Left cardiac atrium (tissue), 4 donors: ENCODE measurements at regions of chr9 and their contacts with region 1.

Region 1: GRCh38 chr9:134738869-134739659 is 97.5 kb downstream of the COL5A1 start:
- DNase-seq: peak; percentile 79
- ATAC-seq: peak; percentile 29 to 49

Region 2: GRCh38 chr9:134178768-134179551 is 560.1 kb before region 1 on chr9:
- intact Hi-C with region 1: loop called in 1 of 2 experiments (anchors 10 kb)
- DNase-seq: peak; percentile 33
- ATAC-seq: peak; percentile 21 to 67

Region 3: DNA sequence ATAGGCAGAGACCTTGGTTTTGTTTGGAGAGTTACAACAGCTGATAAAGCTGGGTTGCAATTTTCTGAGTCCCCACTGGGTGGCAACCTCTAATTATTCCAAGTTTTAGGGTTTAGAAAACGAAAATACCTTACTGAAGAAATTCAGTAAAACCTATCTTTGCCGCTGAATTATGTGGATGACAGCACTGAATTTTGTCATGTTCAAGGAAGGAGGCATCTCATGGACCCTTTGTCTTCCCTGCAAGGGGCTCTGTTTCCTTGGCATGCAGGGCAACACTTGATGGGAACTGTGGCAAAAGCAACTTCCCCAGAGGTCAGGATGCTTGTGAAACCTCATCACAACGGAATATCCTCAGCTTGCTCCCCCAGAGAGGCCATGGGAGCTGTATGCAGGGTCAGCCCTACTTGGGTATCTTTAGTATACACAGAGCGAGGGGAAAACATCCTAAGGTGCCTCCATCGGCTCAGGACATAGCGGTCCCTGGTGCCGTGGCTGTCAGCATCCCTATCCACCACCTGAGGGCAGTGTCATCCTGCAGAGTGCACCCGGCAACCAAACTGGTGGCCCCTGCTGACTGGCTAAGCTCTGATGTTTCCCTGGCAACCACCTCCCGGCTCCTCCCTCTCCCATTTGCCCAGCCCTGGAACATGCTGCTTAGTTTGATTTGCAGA is 289.7 kb before region 1 on chr9:
- intact Hi-C with region 1: loop called (anchors 1 to 2 kb)
- DNase-seq: peak; percentile 93
- ATAC-seq: peak; percentile 95 to 96

Region 4: DNA sequence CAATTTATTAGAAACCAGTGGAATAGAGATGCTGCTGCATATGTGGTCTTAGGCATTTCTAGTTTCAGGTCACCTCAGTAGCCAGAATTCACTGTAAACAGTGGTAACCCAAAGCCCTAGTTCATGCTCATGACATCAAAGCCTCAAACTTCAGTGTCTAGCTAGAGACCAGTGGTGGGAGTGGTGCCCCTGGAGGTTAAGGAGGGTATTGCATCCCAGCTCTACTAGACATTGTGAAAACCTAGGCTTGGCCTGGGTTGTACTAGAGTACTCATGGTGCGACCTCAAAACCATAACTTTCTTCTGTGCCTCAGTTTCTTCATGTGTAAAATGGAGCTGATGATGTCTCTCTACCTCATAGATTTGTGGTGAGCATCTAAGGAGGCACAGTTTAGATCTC is 78.7 kb before region 1 on chr9:
- intact Hi-C with region 1: no loop called
- DNase-seq: no peak
- ATAC-seq: no peak

Region 5: GRCh38 chr9:134698587-134699342 is 40.3 kb before region 1 on chr9:
- intact Hi-C with region 1: loop called (anchors 5 kb)
- DNase-seq: peak; percentile 71
- ATAC-seq: peak; percentile 53 to 75

Region 6: GRCh38 chr9:135898634-135899407 is 1159.8 kb after region 1 on chr9:
- intact Hi-C with region 1: no loop called
- DNase-seq: no peak
- ATAC-seq: peak in 1 of 2 donors; percentile 50